MCF 10A (cell line): ENCODE measurements at regions of chrX and their contacts with region 1.

Region 1: GRCh38 chrX:95076449-95076848 is 1402.4 kb downstream of the FAM133A start:
- DNase-seq: peak; percentile 62
- H3K4me3 Mint-ChIP-seq: no peak overlapping the region
- H3K27ac Mint-ChIP-seq: no peak overlapping the region
- H3K4me1 Mint-ChIP-seq: peaks cover 5% of the 10 kb centered on the region
- H3K27me3 Mint-ChIP-seq: peaks cover 40% of the 10 kb centered on the region
- CTCF ChIP-seq: peak; percentile 68

Region 2: DNA sequence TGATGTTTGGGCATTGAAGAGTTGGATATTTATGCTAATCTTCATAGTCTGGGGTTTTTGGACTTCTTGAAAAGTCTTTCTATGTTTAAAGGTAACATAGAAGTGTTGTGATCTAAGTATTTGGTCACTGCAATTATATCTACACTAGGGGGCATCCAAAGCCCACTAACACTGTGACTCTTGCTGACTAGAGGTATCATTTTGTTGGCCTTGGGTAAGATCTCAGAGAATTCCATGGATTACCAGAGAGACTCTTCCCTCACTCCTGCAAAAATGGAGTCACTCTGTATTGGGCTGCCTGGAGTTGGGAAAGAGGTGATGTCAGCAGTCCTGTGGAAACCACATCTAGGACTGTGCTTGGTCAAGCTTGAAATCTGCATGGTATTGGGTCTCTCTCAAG is 324.8 kb before region 1 on chrX:
- CTCF ChIA-PET with region 1: no interaction called
- POLR2A ChIA-PET with region 1: no interaction called
- intact Hi-C with region 1: no loop called
- DNase-seq: peak; percentile 11
- H3K4me3 Mint-ChIP-seq: no peak overlapping the region
- H3K27ac Mint-ChIP-seq: no peak overlapping the region
- H3K4me1 Mint-ChIP-seq: no peaks in the 10 kb centered on the region
- H3K27me3 Mint-ChIP-seq: peaks cover 32% of the 10 kb centered on the region
- CTCF ChIP-seq: no peak

Region 3: DNA sequence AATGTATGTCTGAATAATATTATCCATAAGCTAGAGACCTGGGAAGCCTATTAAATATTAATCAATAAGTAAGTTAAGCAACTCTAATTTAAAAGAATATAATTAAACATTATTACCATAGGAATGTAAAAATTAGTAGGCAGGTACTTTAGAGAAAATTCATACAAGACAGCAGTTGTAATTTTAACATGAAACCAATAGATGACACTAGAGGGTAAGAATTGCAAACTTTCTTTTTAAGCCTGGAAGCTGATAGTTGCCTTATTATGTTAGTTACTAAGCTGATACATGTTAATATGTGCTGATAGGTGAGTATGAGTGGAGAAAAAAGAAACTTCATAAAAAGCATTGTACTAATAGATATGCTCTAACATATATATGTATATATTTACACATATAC is 245.1 kb before region 1 on chrX:
- CTCF ChIA-PET with region 1: interaction called, 6 read pairs
- POLR2A ChIA-PET with region 1: no interaction called
- intact Hi-C with region 1: loop called (anchors 1 kb)
- DNase-seq: peak; percentile 36
- H3K4me3 Mint-ChIP-seq: no peak overlapping the region
- H3K27ac Mint-ChIP-seq: no peak overlapping the region
- H3K4me1 Mint-ChIP-seq: no peaks in the 10 kb centered on the region
- H3K27me3 Mint-ChIP-seq: peaks cover 11% of the 10 kb centered on the region
- CTCF ChIP-seq: peak; percentile 64

Region 4: DNA sequence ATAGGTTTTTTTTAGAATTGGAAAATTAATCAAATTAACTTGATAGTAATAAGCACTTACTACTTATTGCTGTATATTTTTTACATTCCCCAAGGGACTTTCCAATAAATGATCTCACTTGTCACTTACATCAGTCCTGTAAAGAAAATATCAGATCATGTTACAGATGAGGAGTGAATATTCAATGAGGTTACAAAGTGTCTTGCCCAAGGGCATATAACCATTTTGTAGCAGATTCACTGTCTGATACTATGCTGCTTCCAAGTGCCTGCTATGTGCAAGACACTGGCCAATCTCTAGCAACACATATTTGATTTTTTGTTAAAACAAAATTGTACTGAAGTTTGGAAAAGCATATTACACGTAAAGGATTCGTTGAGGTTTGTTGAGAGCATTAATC is 114.7 kb before region 1 on chrX:
- CTCF ChIA-PET with region 1: interaction called, 3 read pairs
- POLR2A ChIA-PET with region 1: no interaction called
- intact Hi-C with region 1: loop called (anchors 10 kb)
- DNase-seq: peak; percentile 43
- H3K4me3 Mint-ChIP-seq: no peak overlapping the region
- H3K27ac Mint-ChIP-seq: no peak overlapping the region
- H3K4me1 Mint-ChIP-seq: no peaks in the 10 kb centered on the region
- H3K27me3 Mint-ChIP-seq: peaks cover 3% of the 10 kb centered on the region
- CTCF ChIP-seq: no peak

Region 5: DNA sequence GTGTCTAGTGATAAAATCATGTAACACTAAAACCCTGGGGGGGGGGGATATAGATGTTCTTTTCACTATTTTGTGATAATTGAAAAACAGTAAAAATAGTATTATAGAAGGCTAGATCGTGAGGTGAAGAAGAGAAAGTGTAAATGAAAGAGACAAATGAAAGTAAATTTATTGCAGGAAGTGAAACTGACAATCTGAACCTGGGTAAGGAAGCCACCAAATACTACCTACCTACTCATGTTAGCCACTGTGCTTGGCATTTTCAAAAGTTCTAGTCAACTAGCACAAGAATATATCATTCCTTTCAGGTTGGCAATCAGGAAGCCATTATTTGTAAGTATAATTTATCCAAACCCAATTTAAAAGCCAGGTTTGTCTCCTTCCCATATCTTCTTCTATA is 36.3 kb before region 1 on chrX:
- CTCF ChIA-PET with region 1: no interaction called
- POLR2A ChIA-PET with region 1: no interaction called
- intact Hi-C with region 1: no loop called
- DNase-seq: no peak
- H3K4me3 Mint-ChIP-seq: no peak overlapping the region
- H3K27ac Mint-ChIP-seq: no peak overlapping the region
- H3K4me1 Mint-ChIP-seq: no peaks in the 10 kb centered on the region
- H3K27me3 Mint-ChIP-seq: peaks cover 16% of the 10 kb centered on the region
- CTCF ChIP-seq: no peak

Region 6: DNA sequence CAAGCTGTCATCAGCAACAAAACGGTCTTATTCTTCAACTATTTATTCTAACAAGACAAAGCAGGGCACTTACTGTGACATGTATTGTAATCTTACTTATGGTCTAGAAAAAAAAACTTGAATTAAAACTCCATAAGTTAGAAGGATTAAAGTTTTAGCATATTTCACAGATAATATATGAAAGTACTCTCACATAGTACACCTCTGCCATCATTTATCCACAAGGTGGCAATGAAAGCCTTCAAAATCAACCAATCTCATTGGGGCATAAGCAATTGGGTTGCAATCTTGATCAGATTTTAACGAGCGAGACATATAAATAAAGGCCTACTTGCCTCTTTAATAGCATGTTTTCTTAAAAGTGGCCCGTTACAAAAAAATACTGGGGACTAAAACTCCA is 19.5 kb before region 1 on chrX:
- CTCF ChIA-PET with region 1: interaction called, 13 read pairs
- POLR2A ChIA-PET with region 1: interaction called, 5 read pairs
- intact Hi-C with region 1: loop called (anchors 1 kb)
- DNase-seq: peak; percentile 54
- H3K4me3 Mint-ChIP-seq: no peak overlapping the region
- H3K27ac Mint-ChIP-seq: no peak overlapping the region
- H3K4me1 Mint-ChIP-seq: peaks cover 10% of the 10 kb centered on the region
- H3K27me3 Mint-ChIP-seq: peaks cover 45% of the 10 kb centered on the region
- CTCF ChIP-seq: peak; percentile 33